A673 (cell line): ENCODE measurements at regions of chr22 and their contacts with region 1.

Region 1: GRCh38 chr22:25057013-25057881 is 104.7 kb downstream of the KIAA1671 start:
- DNase-seq: peak; percentile 67
- H3K4me3 ChIP-seq: no peak overlapping the region
- H3K27ac ChIP-seq: no peak overlapping the region
- H3K4me1 ChIP-seq: no peaks in the 10 kb centered on the region
- H3K27me3 ChIP-seq: no peaks in the 10 kb centered on the region
- CTCF ChIP-seq: peak; percentile 89

Region 2: GRCh38 chr22:24878969-24879368 is 178.3 kb before region 1 on chr22:
- CTCF ChIA-PET with region 1: interaction called, 12 read pairs
- POLR2A ChIA-PET with region 1: no interaction called
- intact Hi-C with region 1: no loop called
- DNase-seq: no peak
- H3K4me3 ChIP-seq: no peak overlapping the region
- H3K27ac ChIP-seq: no peak overlapping the region
- H3K4me1 ChIP-seq: no peaks in the 10 kb centered on the region
- H3K27me3 ChIP-seq: no peaks in the 10 kb centered on the region
- CTCF ChIP-seq: no peak